ENCODE measurements at regions of chr20 and their contacts with region 1.

Region 1: GRCh38 chr20:5480824-5481600 is 164.3 kb upstream of the PROKR2 start:
- DNase-seq: no peak
- ATAC-seq: no peak; a peak in 1 of 6 replicates
- H3K4me3 ChIP-seq: no peak overlapping the region
- H3K27ac ChIP-seq: no peak overlapping the region
- H3K4me1 ChIP-seq: no peaks in the 10 kb centered on the region
- CTCF ChIP-seq: no peak
- EP300 ChIP-seq: no peak
- POLR2A ChIP-seq: no peak
- RAD21 ChIP-seq: no peak

Region 2: GRCh38 chr20:5469111-5469510 is 11.9 kb before region 1 on chr20:
- CTCF ChIA-PET with region 1: interaction called, 11 read pairs
- POLR2A ChIA-PET with region 1: no interaction called
- DNase-seq: no peak
- ATAC-seq: no peak
- H3K4me3 ChIP-seq: no peak overlapping the region
- H3K27ac ChIP-seq: no peak overlapping the region
- H3K4me1 ChIP-seq: no peaks in the 10 kb centered on the region
- CTCF ChIP-seq: no peak
- EP300 ChIP-seq: no peak
- POLR2A ChIP-seq: no peak
- RAD21 ChIP-seq: no peak

Measured in A549 (cell line).